Left ventricle myocardium superior (tissue), 1 donor: ENCODE measurements at regions of chr3 and their contacts with region 1.

Region 1: DNA sequence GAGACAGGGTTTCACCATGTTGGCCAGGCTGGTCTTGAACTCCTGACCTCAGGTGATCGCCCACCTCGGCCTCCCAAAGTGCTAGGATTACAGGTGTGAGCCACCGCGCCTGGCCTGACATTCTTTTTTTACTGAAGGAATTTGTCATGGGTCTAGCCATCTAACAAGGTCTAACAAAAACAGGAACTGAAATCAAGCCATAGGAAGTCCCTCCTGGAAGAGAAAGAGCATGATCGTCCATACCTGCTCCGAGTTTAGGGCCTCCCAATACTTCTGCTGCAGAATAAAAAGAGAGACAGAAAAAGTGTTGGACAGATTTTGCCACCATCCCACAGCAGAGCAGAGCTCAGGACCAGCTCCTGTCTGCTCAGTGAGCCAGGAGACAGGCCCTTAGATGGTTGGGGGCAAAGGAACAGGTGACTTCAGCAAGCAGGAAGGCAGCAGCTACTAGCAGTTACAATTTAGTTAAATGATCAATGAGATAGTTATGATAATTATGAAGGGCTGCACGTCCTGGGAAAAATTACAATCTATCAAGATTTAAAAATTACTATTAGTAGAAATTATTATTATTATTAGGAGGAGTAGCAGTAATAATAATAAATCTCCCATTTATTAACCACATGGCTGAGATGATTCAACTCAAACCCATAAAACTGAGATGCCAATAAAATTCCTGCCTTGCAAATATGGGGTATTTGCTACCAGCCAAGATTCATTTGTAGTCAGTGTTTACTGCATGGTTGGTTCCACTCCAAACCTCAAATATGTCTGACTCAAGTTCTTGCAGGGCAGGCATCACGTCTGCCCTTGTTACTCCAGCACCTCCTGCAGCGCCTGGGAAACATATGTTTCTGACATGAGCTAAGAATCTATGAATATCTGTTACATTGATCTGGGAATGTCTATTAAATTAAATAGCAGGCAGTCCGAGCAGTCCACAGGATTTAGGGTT is 40.1 kb downstream of the TMEM44 start:
- DNase-seq: no peak
- ATAC-seq: peak; percentile 25

Region 2: DNA sequence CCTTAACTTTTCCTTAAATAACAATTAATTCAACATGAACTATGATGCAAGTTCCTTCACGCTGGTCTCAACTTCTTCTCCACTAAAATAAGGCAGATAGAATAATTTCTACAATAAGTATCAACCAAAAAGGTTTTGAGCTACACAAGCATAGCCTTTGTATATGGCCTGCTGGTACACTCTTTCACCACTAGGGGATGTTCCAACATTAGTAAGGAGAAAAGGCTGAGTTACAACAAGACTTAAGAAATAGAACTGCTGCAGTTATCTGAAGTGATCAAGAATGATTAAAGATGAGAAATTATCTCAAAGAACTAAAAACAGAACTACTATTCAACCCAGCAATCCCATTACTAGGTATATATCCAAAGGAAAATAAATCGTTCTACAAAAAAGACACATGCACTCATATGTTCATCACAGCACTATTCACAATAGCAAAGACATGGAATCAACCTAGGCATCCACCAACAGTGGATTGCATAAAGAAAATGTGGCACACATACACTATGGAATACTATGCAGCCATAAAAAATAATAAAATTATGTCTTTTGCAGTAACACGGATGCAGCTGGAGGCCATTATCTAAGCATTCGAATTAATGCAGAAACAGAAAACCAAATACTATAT is 120.7 kb before region 1 on chr3:
- intact Hi-C with region 1: loop called (anchors 5 kb)
- DNase-seq: no peak
- ATAC-seq: peak; percentile 39